ENCODE measurements at regions of chr7 and their contacts with region 1.

Region 1: DNA sequence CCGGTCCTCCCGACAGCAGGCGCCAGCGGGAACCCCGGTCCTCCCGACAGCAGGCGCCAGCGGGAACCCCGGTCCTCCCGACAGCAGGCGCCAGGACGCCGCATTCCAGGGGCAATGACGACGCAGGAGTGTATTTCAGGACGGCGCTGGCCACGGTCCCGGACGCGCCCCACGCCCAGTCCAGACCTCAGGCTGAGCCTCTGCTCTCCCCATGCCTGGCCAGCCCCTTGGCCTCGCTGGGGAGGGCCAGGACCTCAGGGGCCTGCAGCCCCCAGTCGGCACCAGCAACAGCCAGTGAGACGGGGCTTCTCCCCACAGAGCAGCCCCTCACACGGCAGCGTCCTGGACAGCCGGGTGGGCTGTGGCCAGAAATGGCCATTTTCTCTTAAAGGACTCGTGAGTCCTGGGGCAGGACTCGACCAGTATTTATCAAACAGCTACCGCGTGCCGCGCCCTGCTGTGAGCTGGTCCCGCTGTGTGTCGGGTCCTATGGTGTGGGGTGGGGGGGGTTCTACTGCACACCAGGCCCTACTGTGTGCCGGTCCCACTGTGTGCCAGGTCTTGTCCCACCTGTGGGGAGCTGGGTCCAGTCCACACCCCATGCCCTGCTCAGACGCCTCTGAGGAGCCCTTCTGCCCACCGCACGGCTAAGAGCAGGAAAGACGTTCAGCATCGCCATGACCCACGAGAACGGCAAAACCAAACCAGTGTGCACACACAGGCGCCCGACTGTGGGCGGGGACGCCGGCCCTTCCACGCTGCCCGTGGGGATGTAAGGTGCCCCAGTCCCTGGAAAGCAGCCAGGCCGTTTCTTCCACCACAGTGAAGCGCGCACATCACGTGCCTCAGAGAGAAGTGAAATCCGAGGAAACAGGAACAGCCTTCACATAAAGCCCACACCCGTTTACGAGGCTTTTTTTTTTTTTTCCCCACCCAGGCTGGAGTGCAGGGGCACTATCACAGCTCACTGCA is 33.3 kb downstream of the GET4 start:
- DNase-seq: peak; percentile 84 to 91 (median 88)
- H3K4me3 ChIP-seq: peak overlapping the region in 3 of 7 experiments; percentile 33 to 65 (median 48)
- H3K27ac ChIP-seq: no peak overlapping the region
- H3K4me1 ChIP-seq: peaks cover 0 to 25% (median 23%) of the 10 kb centered on the region in 4 experiments
- H3K27me3 ChIP-seq: peaks cover 0 to 12% (median 0%) of the 10 kb centered on the region in 5 experiments

Region 2: GRCh38 chr7:923108-924041 is 13.7 kb after region 1 on chr7:
- CTCF ChIA-PET with region 1: interaction called, 29 read pairs
- POLR2A ChIA-PET with region 1: interaction called, 3 read pairs
- DNase-seq: peak; percentile 96 to 99 (median 98)
- H3K4me3 ChIP-seq: peak overlapping the region in 4 of 7 experiments; percentile 10 to 65 (median 44)
- H3K27ac ChIP-seq: peak overlapping the region in 1 of 2 experiments; percentile 33
- H3K4me1 ChIP-seq: peaks cover 0 to 69% (median 56%) of the 10 kb centered on the region in 4 experiments
- H3K27me3 ChIP-seq: no peaks in the 10 kb centered on the region

Region 3: DNA sequence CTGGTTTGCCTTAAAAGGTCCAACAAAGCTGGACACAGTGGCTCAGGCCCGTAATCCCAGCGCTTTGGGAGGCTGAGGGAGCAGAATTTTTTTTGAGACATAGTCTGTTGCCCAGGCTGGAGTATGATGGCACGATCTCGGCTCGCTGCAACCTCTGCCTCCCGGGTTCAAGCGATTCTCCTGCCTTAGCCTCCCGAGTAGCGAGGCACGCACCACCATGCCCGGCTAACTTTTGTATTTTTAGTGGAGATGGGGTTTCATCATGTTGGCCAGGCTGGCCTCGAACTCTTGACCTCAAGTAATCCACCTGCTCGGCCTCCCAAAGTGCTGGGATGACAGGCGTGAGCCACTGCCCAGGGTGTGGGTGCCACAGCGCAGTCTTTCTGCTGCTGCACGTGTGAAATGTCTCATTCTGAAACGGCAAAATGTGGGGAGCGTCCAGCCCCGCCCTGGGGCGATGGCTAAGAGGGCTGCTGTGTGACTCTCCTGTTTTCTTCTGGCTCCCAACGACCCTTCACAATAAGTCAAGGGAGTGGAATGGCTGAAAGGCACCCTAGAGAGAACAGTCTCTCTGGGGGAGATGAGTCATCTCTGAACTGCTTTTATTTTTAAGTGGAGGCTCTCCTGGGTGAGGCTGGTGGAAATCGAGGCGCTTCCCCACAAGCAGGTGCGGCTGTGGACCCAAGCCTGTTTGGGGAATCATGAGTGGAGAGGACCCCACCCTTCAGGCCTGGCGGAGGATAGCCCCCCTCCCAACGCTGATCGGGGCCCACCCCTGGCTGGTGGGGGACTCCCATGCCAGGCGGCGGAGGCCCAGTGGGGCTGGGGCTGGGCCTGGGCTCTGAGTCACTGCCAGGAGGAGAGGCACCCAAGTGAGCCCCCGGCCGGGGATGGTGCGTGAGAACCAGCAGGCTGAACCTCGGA is 26.7 kb after region 1 on chr7:
- CTCF ChIA-PET with region 1: no interaction called
- POLR2A ChIA-PET with region 1: no interaction called
- DNase-seq: peak in 2 of 3 donors; percentile 36 to 54
- H3K4me3 ChIP-seq: no peak overlapping the region
- H3K27ac ChIP-seq: no peak overlapping the region
- H3K4me1 ChIP-seq: peaks cover 0 to 2% (median 0%) of the 10 kb centered on the region in 4 experiments
- H3K27me3 ChIP-seq: no peaks in the 10 kb centered on the region

Region 4: DNA sequence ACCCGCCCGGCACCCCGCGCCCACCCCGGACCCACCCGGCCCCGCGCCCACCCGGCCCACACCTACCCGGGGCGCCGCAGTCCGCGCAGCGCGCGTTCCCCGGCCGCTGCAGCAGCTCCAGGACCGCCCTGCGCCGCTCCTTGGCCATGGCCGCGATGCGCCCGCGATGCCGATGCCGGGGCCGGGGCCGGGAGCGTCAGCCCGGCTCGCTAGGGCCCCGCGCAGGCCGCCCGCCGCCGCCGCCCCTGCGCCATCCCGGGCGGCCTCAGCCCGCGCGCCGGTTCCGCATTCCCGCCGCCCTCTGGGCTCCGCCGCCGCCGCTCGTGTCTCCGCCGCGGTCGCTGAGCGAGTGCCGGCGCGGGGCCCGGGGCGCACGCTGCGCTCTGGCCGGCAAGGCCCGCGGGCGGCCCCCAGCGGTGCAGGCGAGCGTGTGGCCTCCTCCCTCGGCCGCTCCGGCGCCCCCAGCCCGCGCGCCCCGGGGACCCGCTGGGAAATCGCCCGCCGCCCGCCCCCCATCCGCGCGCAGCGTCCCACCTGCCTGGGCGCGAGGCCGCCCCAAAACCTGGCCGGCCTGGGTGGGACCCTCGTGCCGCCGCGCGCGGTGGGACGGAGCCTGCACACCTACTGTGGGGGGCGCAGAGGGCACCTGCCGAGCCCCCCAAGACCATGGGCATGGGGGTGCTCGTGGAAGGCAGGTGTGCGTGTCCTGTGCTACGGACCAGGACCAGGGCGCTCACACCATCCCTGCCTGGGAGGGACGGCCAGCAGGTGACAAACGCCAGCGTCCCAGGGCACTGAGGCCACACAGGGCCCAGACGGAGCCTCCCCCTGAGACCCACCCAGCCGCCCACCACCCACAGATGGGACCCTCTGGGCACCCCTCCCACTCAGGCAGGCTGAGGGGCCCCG is 44.9 kb after region 1 on chr7 and contains the start of gene ADAP1:
- CTCF ChIA-PET with region 1: interaction called, 45 read pairs
- POLR2A ChIA-PET with region 1: no interaction called
- DNase-seq: peak; percentile 72 to 84 (median 78)
- H3K4me3 ChIP-seq: peak within 1 kb of the TSS; percentile 28 to 68 (median 55)
- H3K27ac ChIP-seq: no peak within 1 kb of the TSS
- H3K4me1 ChIP-seq: peaks cover 0 to 25% (median 11%) of the 10 kb centered on the region in 4 experiments
- H3K27me3 ChIP-seq: peaks cover 0 to 19% (median 0%) of the 10 kb centered on the region in 5 experiments

Region 5: GRCh38 chr7:964401-965231 is 55.0 kb after region 1 on chr7:
- CTCF ChIA-PET with region 1: interaction called, 45 read pairs
- POLR2A ChIA-PET with region 1: interaction called, 3 read pairs
- DNase-seq: peak in 2 of 3 donors; percentile 56 to 60
- H3K4me3 ChIP-seq: peak overlapping the region in 1 of 7 experiments; percentile 48
- H3K27ac ChIP-seq: no peak overlapping the region
- H3K4me1 ChIP-seq: peaks cover 6 to 36% (median 35%) of the 10 kb centered on the region in 4 experiments
- H3K27me3 ChIP-seq: no peaks in the 10 kb centered on the region

Measured in common myeloid progenitor, CD34-positive (primary cell).